AG04449 (cell line): ENCODE measurements at regions of chr1 and their contacts with region 1.

Region 1: DNA sequence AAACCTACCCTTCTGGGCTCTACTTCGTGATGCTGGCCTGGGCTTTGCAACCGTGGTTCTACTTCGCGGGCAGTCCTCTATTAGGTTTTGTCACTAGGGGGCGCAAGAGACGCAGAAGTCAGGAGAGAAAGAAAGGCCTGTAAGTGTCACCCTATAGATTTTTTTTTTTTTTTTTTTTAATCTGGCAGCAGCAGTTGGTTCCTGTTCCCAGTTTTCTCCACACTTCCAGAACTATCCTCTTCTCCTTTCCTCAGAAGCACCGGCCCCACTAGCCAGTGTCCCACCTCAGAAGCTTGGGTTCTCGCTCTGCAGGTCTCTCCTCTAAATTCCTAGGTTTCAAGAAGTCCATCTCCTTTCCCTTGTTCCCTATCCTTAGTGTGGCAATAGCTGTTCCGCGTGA is 9.1 kb upstream of the LCE2D start:
- DNase-seq: no peak
- H3K4me3 ChIP-seq: no peak overlapping the region
- CTCF ChIP-seq: peak; percentile 59

Region 2: GRCh38 chr1:152643945-152644344 is 10.2 kb before region 1 on chr1:
- CTCF ChIA-PET with region 1: interaction called, 22 read pairs
- POLR2A ChIA-PET with region 1: no interaction called
- DNase-seq: no peak
- H3K4me3 ChIP-seq: no peak overlapping the region
- CTCF ChIP-seq: no peak

Region 3: GRCh38 chr1:152795686-152796085 is 141.6 kb after region 1 on chr1:
- CTCF ChIA-PET with region 1: no interaction called
- POLR2A ChIA-PET with region 1: no interaction called
- DNase-seq: no peak
- H3K4me3 ChIP-seq: no peak overlapping the region
- CTCF ChIP-seq: no peak